Dorsolateral prefrontal cortex (tissue), 120 donors: ENCODE measurements at regions of chr1 and their contacts with region 1.

Region 1: DNA sequence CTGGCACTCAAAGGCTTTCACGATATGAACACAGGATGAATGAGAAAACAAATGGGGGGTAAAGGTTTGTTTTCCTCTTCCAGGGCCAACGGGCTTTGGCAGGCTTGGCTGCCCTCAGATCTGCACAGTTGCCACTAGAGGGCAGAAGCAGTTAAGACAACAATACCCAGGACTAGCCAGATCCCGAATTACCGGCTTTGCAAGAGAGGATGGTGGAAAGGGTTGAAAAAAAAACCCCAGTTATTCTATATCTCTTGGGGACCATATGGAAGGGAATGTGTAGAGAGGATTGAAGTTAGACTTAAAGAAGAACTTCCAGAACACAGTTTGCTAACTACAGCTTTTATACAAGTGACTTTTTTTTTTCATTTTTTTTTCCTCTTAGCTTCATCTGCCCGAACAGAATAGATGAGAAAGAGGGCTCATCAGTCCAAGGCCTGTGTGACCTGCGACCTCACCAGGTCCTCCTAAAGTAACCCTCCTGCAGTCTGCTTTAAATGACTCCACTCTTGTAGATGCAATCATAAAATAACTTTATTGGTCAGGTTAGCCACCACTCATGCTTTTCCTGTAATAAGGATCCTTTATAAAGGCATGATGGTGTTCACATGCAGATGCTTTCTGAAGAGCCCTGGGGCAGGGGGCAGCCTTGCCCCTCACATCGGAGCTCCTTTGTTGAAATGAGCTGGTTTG is 10.7 kb downstream of the FMOD start:
- DNase-seq: peak; percentile 39 to 83 (median 70)
- H3K4me3 ChIP-seq: no peak overlapping the region
- H3K27ac ChIP-seq: peak overlapping the region in 48 of 59 donors; percentile 0 to 80 (median 62)
- H3K27me3 ChIP-seq: no peaks in the 10 kb centered on the region
- CTCF ChIP-seq: peak; percentile 84 to 99 (median 96)

Region 2: GRCh38 chr1:203390298-203390697 is 50.0 kb after region 1 on chr1:
- intact Hi-C with region 1: no loop called
- DNase-seq: no peak
- H3K4me3 ChIP-seq: no peak overlapping the region
- H3K27ac ChIP-seq: no peak overlapping the region
- H3K27me3 ChIP-seq: no peaks in the 10 kb centered on the region
- CTCF ChIP-seq: no peak

Region 3: DNA sequence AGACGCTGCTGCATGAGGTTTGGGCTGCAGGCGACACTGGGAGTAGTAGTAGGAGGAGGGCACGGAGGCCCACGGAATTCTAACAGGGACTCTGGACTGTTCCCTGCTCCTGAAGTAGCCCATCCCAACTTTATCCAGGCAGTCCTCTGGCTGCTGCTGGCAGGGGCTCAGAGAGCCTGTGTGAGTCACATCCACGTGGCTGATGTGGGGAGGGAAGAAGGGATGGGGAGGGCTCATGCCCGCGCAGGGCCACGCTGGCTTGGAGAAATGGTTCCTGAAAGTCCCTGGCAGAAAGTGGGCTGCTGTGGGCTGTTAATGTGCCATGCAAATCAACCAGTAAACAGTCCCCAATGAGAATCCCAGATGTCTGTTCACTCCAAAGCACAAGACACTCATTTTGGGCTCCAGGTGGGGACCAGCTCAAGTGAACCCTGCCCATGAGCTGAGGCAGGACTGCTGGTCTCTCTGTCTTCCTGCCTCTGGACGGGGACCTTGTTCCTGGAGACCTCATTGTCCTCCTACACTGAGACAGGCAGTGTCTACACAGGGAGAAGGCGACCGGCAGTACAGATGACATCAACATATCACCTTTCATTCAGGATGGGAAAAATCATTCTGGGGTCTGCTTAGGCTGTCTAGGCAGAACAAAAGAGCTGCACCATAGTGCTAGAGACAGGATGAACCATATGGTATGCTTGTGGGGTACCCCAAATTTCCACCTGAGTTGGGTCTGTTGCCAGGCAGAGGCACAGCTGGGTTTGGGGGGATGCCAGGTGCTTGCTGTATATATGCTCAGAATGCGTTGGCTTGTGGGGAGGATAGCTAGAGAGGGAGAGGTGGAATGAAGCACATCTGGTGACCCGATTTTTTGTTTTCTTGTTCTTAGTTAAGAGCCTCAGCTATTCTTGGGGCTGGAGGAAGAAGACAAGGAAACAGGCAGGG is 68.5 kb after region 1 on chr1:
- intact Hi-C with region 1: loop called (anchors 5 kb)
- DNase-seq: peak; percentile 38 to 94 (median 84)
- H3K4me3 ChIP-seq: peak overlapping the region in 6 of 59 donors; percentile 5 to 37 (median 14)
- H3K27ac ChIP-seq: peak overlapping the region in 56 of 59 donors; percentile 1 to 87 (median 67)
- H3K27me3 ChIP-seq: no peaks in the 10 kb centered on the region
- CTCF ChIP-seq: peak in 3 of 56 donors; percentile 12 to 30 (median 15)

Region 4: DNA sequence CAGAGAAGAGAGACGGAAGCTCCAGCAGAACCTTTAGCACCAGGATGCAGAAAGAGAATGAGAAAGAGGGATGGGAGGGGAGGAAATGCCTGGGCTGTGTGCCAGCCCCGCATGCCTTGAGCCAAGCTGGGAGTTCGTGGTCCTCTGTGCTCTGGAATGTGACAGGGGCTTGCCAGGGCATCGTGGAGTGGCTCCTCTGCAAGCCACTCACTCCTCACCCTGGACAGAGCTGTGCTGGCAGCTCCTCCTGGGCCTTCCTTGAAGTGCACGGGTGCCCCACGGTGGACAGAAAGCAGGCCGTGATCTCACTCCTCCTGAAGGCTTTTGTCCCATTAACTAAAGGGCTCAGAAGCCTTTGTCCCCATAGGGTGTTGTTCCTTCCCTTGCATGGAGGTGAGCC is 100.5 kb after region 1 on chr1:
- intact Hi-C with region 1: loop called (anchors 1 to 2 kb)
- DNase-seq: peak; percentile 64 to 83 (median 76)
- H3K4me3 ChIP-seq: no peak overlapping the region
- H3K27ac ChIP-seq: peak overlapping the region in 40 of 59 donors; percentile 1 to 78 (median 44)
- H3K27me3 ChIP-seq: no peaks in the 10 kb centered on the region
- CTCF ChIP-seq: peak in 55 of 56 donors; percentile 17 to 84 (median 68)

Region 5: GRCh38 chr1:203486618-203487370 is 146.5 kb after region 1 on chr1:
- intact Hi-C with region 1: loop called (anchors 1 to 2 kb)
- DNase-seq: no peak
- H3K4me3 ChIP-seq: peak overlapping the region in 34 of 59 donors; percentile 31 to 68 (median 55)
- H3K27ac ChIP-seq: peak overlapping the region in 54 of 59 donors; percentile 10 to 88 (median 68)
- H3K27me3 ChIP-seq: no peaks in the 10 kb centered on the region
- CTCF ChIP-seq: no peak

Region 6: GRCh38 chr1:203702130-203702577 is 361.9 kb after region 1 on chr1:
- intact Hi-C with region 1: loop called (anchors 5 to 10 kb)
- DNase-seq: peak; percentile 27 to 80 (median 58)
- H3K4me3 ChIP-seq: no peak overlapping the region
- H3K27ac ChIP-seq: peak overlapping the region in 12 of 59 donors; percentile 4 to 60 (median 30)
- H3K27me3 ChIP-seq: no peaks in the 10 kb centered on the region
- CTCF ChIP-seq: peak; percentile 78 to 98 (median 93)

Region 7: GRCh38 chr1:203937644-203938330 is 597.5 kb after region 1 on chr1:
- intact Hi-C with region 1: no loop called
- DNase-seq: no peak
- H3K4me3 ChIP-seq: no peak overlapping the region
- H3K27ac ChIP-seq: no peak overlapping the region
- H3K27me3 ChIP-seq: peaks cover 0 to 5% (median 0%) of the 10 kb centered on the region in 45 donors
- CTCF ChIP-seq: no peak